ENCODE measurements at regions of chr19 and their contacts with region 1.

Region 1: DNA sequence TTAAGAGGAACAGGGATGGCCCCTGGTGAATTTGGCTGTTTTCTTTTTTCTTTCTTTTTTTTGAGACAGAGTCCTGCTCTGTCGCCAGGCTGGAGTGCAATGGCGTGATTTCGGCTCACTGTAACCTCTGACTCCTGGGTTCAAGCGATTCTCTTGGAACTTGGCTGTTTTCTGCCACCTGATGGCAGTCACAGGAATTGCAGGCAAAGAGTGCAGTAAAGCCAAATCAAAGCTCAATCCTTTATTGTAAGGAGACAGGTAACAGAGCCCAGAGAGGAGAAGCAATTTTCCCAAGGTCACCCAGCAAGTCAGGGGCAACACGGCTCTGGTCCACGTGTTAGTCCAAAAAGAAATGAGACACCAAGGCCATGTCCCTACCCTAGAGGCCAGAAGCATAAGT is 6.2 kb downstream of the TINCR start:
- DNase-seq: peak; percentile 46
- ATAC-seq: no peak
- H3K4me3 Mint-ChIP-seq: no peak overlapping the region
- H3K27ac Mint-ChIP-seq: no peak overlapping the region
- H3K4me1 Mint-ChIP-seq: peaks cover 21% of the 10 kb centered on the region
- H3K27me3 Mint-ChIP-seq: peaks cover 2% of the 10 kb centered on the region
- CTCF ChIP-seq: peak; percentile 75

Region 2: DNA sequence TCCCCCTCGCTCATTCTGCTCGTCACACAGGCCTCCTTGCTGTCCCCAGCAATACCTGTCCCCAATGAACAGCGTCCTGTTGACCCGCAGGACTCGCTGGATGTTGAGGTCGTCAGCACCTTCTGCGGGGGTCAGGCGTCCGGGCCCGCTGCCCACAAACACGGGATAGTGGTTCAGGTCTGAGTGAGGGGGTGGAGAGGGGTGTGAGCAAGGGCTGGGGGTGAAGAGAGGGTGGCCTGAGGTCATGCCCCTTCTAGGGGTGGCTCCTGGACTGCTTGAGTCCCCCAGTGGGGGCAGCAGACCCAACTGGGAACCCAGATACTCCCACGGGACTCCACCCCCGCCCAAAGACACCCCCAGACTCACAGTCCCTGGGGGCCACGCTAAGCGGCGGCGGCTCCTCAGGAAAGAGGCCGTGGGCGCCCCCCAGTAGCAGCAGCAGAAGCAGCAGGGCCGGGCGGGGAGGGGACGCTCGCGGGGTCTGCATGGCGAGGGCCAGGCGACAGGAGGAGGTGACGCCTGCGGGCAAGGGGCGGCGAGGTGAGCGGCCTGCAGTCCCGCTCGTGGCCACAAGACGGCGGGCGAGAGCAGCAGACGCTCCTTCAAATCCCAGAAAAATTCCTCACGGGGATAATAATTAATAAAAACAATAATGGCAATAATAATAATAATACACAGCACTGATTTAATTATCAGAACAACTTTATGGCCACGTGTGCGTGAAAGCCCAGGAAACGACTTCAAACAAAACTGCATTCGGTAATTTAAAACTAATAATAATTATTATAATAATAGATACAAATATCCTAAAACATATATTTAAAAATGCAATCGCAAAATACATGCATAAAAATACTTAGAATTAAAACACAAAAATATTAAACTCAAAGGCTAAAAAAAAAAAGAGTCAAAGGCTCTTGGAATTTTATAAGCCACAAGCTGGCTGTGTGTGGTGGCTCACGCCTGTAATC is 1003.3 kb before region 1 on chr19:
- CTCF ChIA-PET with region 1: no interaction called
- POLR2A ChIA-PET with region 1: no interaction called
- DNase-seq: peak; percentile 78
- ATAC-seq: peak; percentile 12; the same call in 1 of the 2 replicates
- H3K4me3 Mint-ChIP-seq: no peak overlapping the region
- H3K27ac Mint-ChIP-seq: no peak overlapping the region
- H3K4me1 Mint-ChIP-seq: peaks cover 9% of the 10 kb centered on the region
- H3K27me3 Mint-ChIP-seq: peaks cover 2% of the 10 kb centered on the region; the same call in 1 of the 2 replicates
- CTCF ChIP-seq: peak; percentile 100

Region 3: DNA sequence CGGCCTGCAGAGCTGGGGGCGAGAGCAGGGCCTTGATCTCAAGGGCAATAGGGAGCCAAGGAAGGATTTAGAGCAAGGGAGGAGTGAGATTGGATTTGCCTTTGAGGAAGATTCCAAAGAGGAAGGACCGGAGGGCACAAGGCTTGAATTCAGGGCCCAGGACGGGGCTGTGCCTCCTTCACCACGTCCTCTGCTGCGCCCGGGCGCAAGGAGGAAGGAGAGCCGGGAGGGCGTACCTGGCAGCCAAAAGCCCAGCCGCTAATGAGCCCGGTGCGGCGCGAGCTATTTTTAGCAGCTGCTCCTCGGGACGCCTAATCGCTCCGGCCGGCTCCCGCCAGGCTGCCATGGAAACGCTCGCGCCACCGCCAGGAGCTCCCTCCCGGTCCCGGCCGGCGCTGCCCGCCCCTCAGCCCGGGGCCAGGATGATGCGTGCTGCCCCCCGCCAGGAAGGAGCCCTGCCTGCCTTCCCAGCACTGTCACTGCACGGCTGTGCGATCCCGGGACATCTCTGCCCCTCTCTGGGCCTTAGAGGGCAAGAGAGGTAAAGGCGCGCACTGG is 25.1 kb before region 1 on chr19:
- CTCF ChIA-PET with region 1: interaction called, 23 read pairs
- POLR2A ChIA-PET with region 1: no interaction called
- DNase-seq: peak; percentile 91
- ATAC-seq: peak; percentile 85
- H3K4me3 Mint-ChIP-seq: peak overlapping the region; percentile 55
- H3K27ac Mint-ChIP-seq: peak overlapping the region; percentile 84
- H3K4me1 Mint-ChIP-seq: peaks cover 21% of the 10 kb centered on the region
- H3K27me3 Mint-ChIP-seq: peaks cover 46% of the 10 kb centered on the region
- CTCF ChIP-seq: no peak

Region 4: GRCh38 chr19:5580161-5580571 is 18.6 kb after region 1 on chr19:
- CTCF ChIA-PET with region 1: interaction called, 15 read pairs
- POLR2A ChIA-PET with region 1: no interaction called
- DNase-seq: no peak
- ATAC-seq: no peak
- H3K4me3 Mint-ChIP-seq: no peak overlapping the region
- H3K27ac Mint-ChIP-seq: peak overlapping the region; percentile 65; the same call in 1 of the 2 replicates
- H3K4me1 Mint-ChIP-seq: peaks cover 17% of the 10 kb centered on the region
- H3K27me3 Mint-ChIP-seq: no peaks in the 10 kb centered on the region
- CTCF ChIP-seq: no peak

Region 5: DNA sequence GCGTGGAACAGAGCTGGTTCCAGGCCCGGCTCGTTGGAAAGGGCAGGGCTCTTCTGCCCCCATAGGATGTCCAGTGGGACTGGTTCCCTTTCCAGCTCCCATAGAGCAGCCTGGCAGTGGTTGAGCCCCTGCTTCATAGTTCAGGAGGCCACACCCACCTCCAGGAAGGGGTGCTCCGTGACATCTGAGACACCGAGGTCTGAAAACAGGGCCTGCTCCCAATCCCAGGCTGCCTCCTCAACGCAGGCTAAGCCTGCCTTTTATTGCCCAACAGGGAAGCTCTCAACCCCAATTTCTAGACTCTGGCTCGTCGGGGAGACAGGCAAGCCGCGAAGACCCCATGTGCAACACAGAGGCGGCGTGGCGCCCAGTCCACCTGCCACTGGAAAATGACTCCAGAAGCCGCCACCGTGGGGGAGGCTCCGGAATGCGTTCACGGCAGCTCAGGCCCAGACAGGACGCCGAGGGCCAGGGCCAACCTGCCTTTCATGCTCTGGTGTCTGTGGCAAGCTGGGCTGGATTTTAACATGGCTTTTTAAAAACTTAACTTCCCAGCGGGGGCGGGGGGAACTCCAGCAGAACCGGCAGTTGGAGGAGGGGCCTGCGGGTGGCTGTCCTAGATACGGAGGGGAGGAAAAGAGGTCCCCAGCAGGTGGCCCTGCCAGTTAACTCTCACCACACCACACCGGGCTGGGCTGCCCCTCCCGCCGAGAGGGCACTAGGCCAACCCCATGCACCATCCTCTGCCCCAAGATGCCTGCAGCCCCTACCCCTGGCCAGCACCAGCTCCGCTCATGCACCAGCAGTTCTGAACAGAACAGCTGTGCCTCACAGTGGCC is 24.1 kb after region 1 on chr19:
- CTCF ChIA-PET with region 1: interaction called, 15 read pairs
- POLR2A ChIA-PET with region 1: no interaction called
- DNase-seq: peak; percentile 73
- ATAC-seq: peak; percentile 79
- H3K4me3 Mint-ChIP-seq: peak overlapping the region; percentile 61
- H3K27ac Mint-ChIP-seq: peak overlapping the region; percentile 95
- H3K4me1 Mint-ChIP-seq: peaks cover 17% of the 10 kb centered on the region
- H3K27me3 Mint-ChIP-seq: no peaks in the 10 kb centered on the region
- CTCF ChIP-seq: no peak

Measured in WTC11 (cell line).